Activated CD4-positive, alpha-beta T cell treated with anti-CD3 and anti-CD28 coated beads for 36 hours (primary cell): ENCODE measurements at regions of chr13 and their contacts with region 1.

Region 1: GRCh38 chr13:91133941-91134802 is 213.3 kb upstream of the MIR17HG start:
- DNase-seq: peak; percentile 49
- ATAC-seq: peak; percentile 51
- H3K4me3 Mint-ChIP-seq: no peak overlapping the region
- H3K27ac Mint-ChIP-seq: no peak overlapping the region
- H3K4me1 Mint-ChIP-seq: no peaks in the 10 kb centered on the region
- H3K27me3 Mint-ChIP-seq: no peaks in the 10 kb centered on the region

Region 2: DNA sequence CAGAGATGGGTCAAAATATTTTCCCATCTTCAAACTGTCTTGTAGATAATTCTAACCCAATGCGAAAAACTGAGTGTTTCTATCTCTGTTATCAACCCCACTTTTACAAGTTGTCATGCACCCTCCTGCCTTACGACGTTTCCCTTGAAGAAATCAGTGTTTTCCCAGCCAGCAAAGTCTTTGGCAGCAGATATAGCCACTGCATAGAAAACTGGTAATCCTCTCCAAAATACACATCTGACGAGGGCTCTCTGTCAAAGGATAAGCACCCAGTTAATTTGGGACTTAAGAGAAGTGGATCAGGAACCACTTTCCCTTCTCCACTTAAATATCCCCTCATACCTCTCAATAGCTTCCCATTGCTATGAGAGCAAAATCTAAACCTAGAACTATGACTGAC is 138.6 kb before region 1 on chr13:
- CTCF ChIA-PET with region 1: no interaction called
- POLR2A ChIA-PET with region 1: no interaction called
- intact Hi-C with region 1: no loop called
- DNase-seq: no peak
- ATAC-seq: no peak
- H3K4me3 Mint-ChIP-seq: no peak overlapping the region
- H3K27ac Mint-ChIP-seq: no peak overlapping the region
- H3K4me1 Mint-ChIP-seq: no peaks in the 10 kb centered on the region
- H3K27me3 Mint-ChIP-seq: no peaks in the 10 kb centered on the region

Region 3: GRCh38 chr13:91145571-91146205 is 11.5 kb after region 1 on chr13:
- CTCF ChIA-PET with region 1: no interaction called
- POLR2A ChIA-PET with region 1: no interaction called
- intact Hi-C with region 1: no loop called
- DNase-seq: no peak
- ATAC-seq: no peak
- H3K4me3 Mint-ChIP-seq: no peak overlapping the region
- H3K27ac Mint-ChIP-seq: no peak overlapping the region
- H3K4me1 Mint-ChIP-seq: no peaks in the 10 kb centered on the region
- H3K27me3 Mint-ChIP-seq: peaks cover 6% of the 10 kb centered on the region

Region 4: DNA sequence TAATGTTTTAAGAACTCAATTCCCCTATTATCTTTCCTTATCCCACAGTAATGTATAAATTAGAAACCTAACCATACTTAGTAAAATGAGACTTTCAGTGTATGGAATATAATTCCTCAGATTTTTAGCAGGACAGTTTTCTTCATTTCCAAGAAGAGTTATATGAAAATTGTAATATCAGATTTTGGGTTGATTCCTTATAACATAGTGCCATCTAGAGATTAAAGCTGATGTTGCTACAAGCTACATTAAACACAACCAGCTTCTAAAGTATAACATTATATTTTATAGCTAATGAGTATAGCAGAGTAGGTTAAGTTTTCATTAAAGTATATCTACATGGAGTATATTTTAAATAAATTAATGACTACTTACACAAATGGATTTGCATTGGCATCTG is 113.6 kb after region 1 on chr13:
- CTCF ChIA-PET with region 1: interaction called, 4 read pairs
- POLR2A ChIA-PET with region 1: no interaction called
- intact Hi-C with region 1: loop called (anchors 1 to 2 kb)
- DNase-seq: no peak
- ATAC-seq: no peak
- H3K4me3 Mint-ChIP-seq: no peak overlapping the region
- H3K27ac Mint-ChIP-seq: no peak overlapping the region
- H3K4me1 Mint-ChIP-seq: no peaks in the 10 kb centered on the region
- H3K27me3 Mint-ChIP-seq: peaks cover 9% of the 10 kb centered on the region

Region 5: DNA sequence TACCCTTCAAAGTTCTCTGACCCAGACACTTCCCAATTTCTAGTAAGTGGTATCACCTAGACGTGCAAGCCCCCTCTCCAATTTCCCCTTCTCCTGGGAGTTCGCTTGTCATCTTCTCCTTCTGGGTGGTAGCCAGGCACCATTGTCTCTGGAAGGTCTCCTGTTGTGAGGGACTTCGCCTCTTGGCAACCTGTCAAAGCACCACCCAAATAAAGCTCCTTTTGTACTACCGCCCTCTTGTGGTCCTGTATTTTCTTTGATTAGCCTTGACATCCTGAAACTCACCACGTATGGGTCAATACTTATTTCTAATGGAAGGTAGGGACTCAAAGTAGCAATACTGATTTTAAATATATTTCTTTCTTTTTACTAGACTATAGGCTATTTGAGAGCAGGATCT is 272.4 kb after region 1 on chr13:
- CTCF ChIA-PET with region 1: interaction called, 5 read pairs
- POLR2A ChIA-PET with region 1: no interaction called
- intact Hi-C with region 1: loop called (anchors 1 to 10 kb)
- DNase-seq: peak; percentile 30
- ATAC-seq: peak; percentile 51
- H3K4me3 Mint-ChIP-seq: no peak overlapping the region
- H3K27ac Mint-ChIP-seq: no peak overlapping the region
- H3K4me1 Mint-ChIP-seq: no peaks in the 10 kb centered on the region
- H3K27me3 Mint-ChIP-seq: peaks cover 14% of the 10 kb centered on the region

Region 6: DNA sequence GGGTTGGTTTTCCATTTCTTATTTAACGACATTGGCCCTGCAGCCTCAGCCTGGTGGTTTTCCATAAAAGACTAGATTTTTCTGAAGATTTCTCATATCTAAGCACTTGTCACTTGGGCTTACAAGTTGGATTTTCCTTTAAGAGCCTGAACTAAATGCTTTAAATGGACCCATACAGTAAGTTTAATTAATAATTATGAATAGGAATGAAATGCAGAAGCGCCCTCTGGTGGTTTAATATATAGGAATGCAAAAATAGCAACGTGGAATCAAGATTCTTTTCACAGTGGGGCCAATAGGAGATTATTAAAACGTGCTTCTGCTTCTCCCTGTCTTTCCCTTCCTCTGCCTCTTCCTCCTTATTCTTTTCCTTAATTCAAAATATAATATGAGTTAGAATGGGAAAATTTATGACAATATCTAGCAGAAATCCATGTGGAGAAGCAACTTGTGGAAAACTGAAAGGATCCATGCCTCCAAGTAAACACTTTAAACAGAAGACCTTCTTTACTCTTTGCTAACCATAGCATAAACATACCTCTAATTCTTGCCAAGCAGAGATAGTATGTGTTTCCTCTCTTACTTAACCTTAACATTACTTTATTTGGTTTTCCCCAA is 588.2 kb after region 1 on chr13:
- CTCF ChIA-PET with region 1: no interaction called
- POLR2A ChIA-PET with region 1: no interaction called
- intact Hi-C with region 1: loop called in 1 of 2 experiments (anchors 2 kb)
- DNase-seq: no peak
- ATAC-seq: no peak
- H3K4me3 Mint-ChIP-seq: no peak overlapping the region
- H3K27ac Mint-ChIP-seq: no peak overlapping the region
- H3K4me1 Mint-ChIP-seq: no peaks in the 10 kb centered on the region
- H3K27me3 Mint-ChIP-seq: peaks cover 8% of the 10 kb centered on the region